ENCODE measurements at regions of chrX and their contacts with region 1.

Region 1: GRCh38 chrX:3345281-3346191 is 916 bp downstream of the MXRA5 start:
- DNase-seq: peak; percentile 72
- H3K4me3 ChIP-seq: peak overlapping the region; percentile 75
- H3K27ac ChIP-seq: peak overlapping the region; percentile 64
- H3K4me1 ChIP-seq: no peaks in the 10 kb centered on the region
- H3K27me3 ChIP-seq: no peaks in the 10 kb centered on the region

Region 2: DNA sequence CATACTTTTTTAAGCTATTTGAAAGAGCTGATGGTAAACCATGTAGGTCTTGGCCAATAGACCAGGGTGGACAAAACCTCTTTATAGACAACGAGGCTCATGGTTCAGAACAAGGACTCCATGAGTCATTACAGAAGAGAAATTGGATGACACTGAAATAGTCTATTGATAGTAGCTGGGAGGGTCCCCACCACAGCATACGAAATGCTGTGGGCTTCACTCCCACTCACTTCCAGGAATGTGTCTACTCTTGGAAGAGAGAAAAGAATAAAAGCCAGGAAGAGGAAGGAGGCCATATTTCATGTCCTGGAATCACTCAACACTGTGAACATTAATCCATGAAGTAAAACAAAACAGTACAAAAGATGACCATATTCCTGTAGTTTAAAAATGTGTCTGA is 83.3 kb after region 1 on chrX:
- in situ Hi-C with region 1: no loop called
- DNase-seq: peak; percentile 50
- H3K4me3 ChIP-seq: no peak overlapping the region
- H3K27ac ChIP-seq: peak overlapping the region; percentile 41
- H3K4me1 ChIP-seq: 0 out of 2 replicates have a peak, but pooled peaks cover 12% of the 10 kb centered on the region
- H3K27me3 ChIP-seq: no peaks in the 10 kb centered on the region

Region 3: DNA sequence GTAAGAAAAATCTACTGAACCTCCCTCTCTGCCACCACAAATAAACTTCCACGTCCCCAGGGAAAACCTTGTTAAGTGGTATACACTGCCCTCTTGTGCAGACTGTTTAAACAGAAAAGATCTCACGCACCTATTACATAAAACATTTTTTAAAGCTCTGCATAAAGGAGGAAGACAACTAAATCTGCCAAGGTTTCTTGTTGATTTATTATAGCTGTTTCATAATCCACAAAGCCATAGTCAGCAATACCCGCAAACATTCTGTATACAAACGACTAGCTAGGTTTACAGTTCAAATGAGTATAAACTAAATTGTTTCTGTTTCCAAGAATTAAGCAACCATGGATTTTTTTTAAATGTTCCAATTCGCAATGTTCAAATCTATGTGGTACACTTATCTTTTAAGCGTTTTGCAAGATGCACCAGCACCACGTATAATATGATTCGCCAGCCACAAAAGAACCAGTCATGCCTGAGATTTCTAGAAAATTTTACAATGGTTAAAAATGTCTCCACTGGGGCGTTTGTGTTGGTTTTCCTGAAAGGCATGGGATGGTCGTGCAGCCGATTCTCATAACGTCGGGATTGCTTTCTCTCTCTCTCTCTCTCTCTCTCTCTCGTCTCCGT is 203.3 kb after region 1 on chrX:
- in situ Hi-C with region 1: loop called (anchors 25 kb)
- DNase-seq: peak; percentile 90
- H3K4me3 ChIP-seq: peak overlapping the region; percentile 72
- H3K27ac ChIP-seq: peak overlapping the region; percentile 78
- H3K4me1 ChIP-seq: peaks cover 12% of the 10 kb centered on the region; the same call in 1 of the 2 replicates
- H3K27me3 ChIP-seq: no peaks in the 10 kb centered on the region

Region 4: GRCh38 chrX:3576886-3577501 is 231.5 kb after region 1 on chrX:
- in situ Hi-C with region 1: no loop called
- DNase-seq: peak; percentile 47
- H3K4me3 ChIP-seq: peak overlapping the region; percentile 14; the same call in 1 of the 2 replicates
- H3K27ac ChIP-seq: no peak overlapping the region
- H3K4me1 ChIP-seq: peaks cover 5% of the 10 kb centered on the region; the same call in 1 of the 2 replicates
- H3K27me3 ChIP-seq: no peaks in the 10 kb centered on the region

Region 5: DNA sequence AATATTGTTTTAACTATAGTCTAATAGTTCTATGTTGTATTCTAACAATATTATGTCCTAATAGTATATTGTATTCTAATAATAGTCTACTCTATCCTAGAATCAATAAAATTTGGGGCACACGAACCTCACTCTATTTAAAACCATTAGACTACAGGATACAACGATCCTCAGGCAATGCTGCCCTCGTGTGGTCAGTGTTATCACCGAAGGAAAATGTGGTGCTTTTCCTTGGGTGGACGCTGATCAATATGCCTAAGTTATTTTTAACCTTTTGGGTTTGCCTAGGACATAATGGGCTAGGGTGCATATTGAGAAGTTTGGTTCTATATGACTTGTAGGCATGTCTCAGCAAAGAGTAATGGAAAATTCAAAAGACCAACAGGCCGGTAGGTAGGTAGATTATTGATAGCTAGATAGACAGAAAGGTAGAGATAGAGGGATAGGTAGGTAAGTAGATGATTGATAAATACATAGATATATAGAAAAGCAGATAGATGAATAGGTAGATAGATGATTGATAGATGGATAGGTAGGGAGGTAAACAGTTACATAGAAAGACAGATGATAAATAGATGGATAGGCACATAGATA is 292.8 kb after region 1 on chrX:
- in situ Hi-C with region 1: loop called (anchors 25 kb)
- DNase-seq: peak; percentile 58
- H3K4me3 ChIP-seq: no peak overlapping the region
- H3K27ac ChIP-seq: no peak overlapping the region
- H3K4me1 ChIP-seq: no peaks in the 10 kb centered on the region
- H3K27me3 ChIP-seq: no peaks in the 10 kb centered on the region

Region 6: GRCh38 chrX:3806630-3807029 is 461.1 kb after region 1 on chrX:
- in situ Hi-C with region 1: no loop called
- DNase-seq: no peak
- H3K4me3 ChIP-seq: no peak overlapping the region
- H3K27ac ChIP-seq: no peak overlapping the region
- H3K4me1 ChIP-seq: no peaks in the 10 kb centered on the region
- H3K27me3 ChIP-seq: no peaks in the 10 kb centered on the region